Activated B cell treated with CpG ODN at 0.5 μM for 24 hours (primary cell): ENCODE measurements at regions of chr1 and their contacts with region 1.

Region 1: GRCh38 chr1:92784639-92785500 is at the start of gene EVI5:
- DNase-seq: peak; percentile 86
- ATAC-seq: peak; percentile 92
- H3K4me3 Mint-ChIP-seq: peak within 1 kb of the TSS; percentile 92
- H3K27ac Mint-ChIP-seq: peak within 1 kb of the TSS; percentile 91
- H3K4me1 Mint-ChIP-seq: peaks cover 31% of the 10 kb centered on the region
- H3K27me3 Mint-ChIP-seq: no peaks in the 10 kb centered on the region
- CTCF ChIP-seq: no peak
- total RNA-seq, gene EVI5: 18.2 and 27.4 TPM in 2 replicates

Region 2: DNA sequence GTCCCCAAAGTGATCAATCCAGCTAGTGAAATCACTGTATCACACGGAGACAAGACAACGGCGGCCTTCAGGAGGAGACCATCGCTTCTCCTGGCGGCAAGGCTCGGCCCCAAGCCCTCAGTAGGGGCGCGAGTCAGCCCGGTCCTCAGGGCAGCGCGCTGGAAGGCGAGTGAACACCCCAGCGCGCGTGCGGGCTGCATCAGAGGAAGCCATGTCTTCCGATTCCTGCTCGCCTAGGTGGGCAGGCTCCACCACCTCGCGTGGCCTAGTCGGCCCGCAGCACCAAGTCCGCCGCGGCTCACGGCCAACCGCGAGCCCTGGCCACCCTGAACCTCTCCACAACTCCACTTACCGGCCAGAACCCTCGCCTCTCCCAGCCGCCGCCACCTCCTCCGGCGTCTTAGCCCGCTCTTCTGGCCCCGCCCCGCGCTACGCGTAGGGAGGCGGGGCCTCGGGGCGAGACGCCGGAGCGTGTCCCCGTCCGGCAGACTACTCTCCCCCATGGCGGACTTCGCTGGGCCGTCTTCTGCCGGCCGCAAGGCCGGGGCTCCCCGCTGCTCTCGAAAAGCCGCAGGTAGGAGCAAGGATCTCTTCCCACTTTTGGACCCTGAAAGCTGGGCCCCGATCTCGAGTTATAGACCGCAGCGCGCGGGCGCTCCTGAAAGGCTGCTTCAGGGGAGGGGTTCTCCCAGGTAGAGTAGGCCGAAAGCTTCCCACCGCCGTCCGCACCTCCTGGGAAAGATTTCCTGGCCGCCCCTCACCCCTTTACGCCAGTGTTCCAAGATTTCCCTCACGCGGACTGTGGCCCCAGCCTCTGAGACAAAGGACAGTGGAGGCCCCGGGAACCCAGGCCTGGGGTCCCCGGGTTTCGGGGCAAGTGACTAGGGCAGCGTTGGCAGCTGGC is 486.0 kb before region 1 on chr1 and contains the starts of genes GLMN and RPAP2:
- CTCF ChIA-PET with region 1: no interaction called
- POLR2A ChIA-PET with region 1: interaction called, 4 read pairs
- intact Hi-C with region 1: loop called (anchors 2 kb)
- DNase-seq: peak; percentile 82
- ATAC-seq: peak; percentile 96
- H3K4me3 Mint-ChIP-seq: peak within 1 kb of the TSS; percentile 99
- H3K27ac Mint-ChIP-seq: peak within 1 kb of the TSS; percentile 99
- H3K4me1 Mint-ChIP-seq: peaks cover 31% of the 10 kb centered on the region
- H3K27me3 Mint-ChIP-seq: no peaks in the 10 kb centered on the region
- CTCF ChIP-seq: no peak
- total RNA-seq, gene GLMN: 11.1 and 14.7 TPM in 2 replicates
- total RNA-seq, gene RPAP2: 27.1 and 31.7 TPM in 2 replicates

Region 3: DNA sequence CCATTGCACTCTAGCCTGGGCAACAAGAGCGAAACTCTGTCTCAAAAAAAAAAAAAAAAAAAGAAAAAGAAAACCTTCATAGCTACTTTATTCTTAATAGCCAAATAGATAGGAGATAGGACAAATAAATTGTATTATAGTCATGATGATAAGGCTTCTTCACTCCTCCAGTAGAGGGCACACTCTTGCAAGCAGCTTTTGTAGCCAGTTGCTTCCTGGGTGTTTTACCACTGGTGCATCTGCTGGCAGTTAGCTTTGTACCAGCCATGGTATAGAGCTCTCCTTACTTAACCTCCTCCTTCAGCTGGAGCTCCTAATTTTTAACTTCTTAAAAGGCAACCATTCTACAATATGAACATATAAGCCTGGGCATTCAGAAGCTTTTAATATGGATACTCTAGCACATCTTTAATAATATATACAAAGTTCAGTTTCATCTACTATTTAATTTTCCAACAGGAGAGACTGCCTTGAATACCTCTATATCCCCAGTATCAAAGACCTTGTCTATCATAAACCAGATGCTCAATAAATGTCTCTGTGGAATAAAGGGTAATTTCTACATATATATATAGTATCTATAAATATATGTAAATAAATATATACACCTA is 35.7 kb before region 1 on chr1:
- CTCF ChIA-PET with region 1: interaction called, 3 read pairs
- POLR2A ChIA-PET with region 1: interaction called, 5 read pairs
- intact Hi-C with region 1: loop called (anchors 1 kb)
- DNase-seq: no peak
- ATAC-seq: peak; percentile 79
- H3K4me3 Mint-ChIP-seq: no peak overlapping the region
- H3K27ac Mint-ChIP-seq: no peak overlapping the region
- H3K4me1 Mint-ChIP-seq: no peaks in the 10 kb centered on the region
- H3K27me3 Mint-ChIP-seq: no peaks in the 10 kb centered on the region
- CTCF ChIP-seq: peak; percentile 32

Region 4: GRCh38 chr1:92817986-92818764 is 33.3 kb after region 1 on chr1:
- CTCF ChIA-PET with region 1: interaction called, 6 read pairs
- POLR2A ChIA-PET with region 1: no interaction called
- intact Hi-C with region 1: loop called (anchors 1 kb)
- DNase-seq: no peak
- ATAC-seq: peak; percentile 61
- H3K4me3 Mint-ChIP-seq: no peak overlapping the region
- H3K27ac Mint-ChIP-seq: no peak overlapping the region
- H3K4me1 Mint-ChIP-seq: peaks cover 2% of the 10 kb centered on the region
- H3K27me3 Mint-ChIP-seq: peaks cover 1% of the 10 kb centered on the region
- CTCF ChIP-seq: no peak

Region 5: DNA sequence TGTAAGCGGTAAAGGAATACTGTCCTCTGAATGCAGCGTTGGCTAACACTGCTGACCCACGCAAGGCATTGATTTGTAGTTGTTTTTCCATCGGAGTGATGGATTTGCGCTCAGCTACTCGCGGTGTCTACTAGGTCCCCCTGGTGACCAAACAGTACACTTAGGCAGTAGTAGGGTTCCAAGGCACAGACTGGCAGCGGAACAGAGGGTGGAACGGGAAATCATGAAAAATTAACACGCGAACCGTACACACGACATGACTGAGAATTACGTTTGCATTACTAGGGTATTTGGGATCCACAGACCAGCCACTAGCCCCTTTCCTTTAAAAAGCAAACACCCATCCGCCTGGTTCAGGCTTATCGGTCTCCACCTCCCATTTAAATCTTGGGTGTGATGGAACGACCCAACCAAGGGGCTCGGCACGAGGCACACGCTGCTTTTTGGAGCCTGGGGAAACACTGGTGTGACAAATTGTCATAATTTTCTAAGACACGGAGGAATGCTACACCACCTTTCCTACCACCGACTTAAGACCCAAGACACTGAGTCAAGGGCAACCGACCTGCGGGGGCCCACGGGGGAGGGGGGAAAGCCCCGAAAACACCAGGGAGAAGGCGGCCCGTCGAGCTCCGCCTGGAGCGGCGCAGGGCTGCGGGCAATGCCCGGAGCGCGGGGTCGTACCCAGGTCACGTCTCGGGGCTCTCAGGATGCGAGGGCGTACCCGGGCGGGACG is 175.7 kb after region 1 on chr1:
- CTCF ChIA-PET with region 1: no interaction called
- POLR2A ChIA-PET with region 1: interaction called, 7 read pairs
- intact Hi-C with region 1: loop called (anchors 2 kb)
- DNase-seq: no peak
- ATAC-seq: peak; percentile 49
- H3K4me3 Mint-ChIP-seq: peak overlapping the region; percentile 96
- H3K27ac Mint-ChIP-seq: peak overlapping the region; percentile 98
- H3K4me1 Mint-ChIP-seq: peaks cover 46% of the 10 kb centered on the region
- H3K27me3 Mint-ChIP-seq: no peaks in the 10 kb centered on the region
- CTCF ChIP-seq: no peak